Cardiac septum (tissue), 1 donor: ENCODE measurements at regions of chr7 and their contacts with region 1.

Region 1: DNA sequence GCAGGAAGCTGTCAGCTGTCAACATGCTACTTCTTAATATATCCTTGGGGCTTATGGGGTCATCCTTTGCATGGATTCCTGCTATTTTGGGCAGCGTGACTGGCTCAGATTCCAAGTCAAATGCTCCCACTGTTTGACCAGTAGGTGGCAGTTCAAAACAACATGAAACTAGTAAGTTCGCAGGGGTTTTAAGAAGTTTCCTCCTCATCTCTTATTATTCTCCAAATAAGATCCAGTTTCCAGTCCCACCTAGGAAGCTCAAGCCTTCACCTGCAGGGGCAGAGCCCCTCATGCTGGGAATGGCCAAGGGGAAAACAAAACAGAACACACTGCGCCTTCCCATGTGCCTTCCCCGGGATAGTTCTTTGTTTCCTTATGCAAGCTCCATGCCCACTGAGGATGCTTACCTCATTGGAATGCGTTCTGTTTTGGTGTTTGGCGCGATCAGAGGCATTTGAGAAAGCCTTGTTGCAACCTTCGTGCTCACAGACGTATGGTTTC is 259.8 kb downstream of the GLI3 start:
- DNase-seq: no peak

Region 2: DNA sequence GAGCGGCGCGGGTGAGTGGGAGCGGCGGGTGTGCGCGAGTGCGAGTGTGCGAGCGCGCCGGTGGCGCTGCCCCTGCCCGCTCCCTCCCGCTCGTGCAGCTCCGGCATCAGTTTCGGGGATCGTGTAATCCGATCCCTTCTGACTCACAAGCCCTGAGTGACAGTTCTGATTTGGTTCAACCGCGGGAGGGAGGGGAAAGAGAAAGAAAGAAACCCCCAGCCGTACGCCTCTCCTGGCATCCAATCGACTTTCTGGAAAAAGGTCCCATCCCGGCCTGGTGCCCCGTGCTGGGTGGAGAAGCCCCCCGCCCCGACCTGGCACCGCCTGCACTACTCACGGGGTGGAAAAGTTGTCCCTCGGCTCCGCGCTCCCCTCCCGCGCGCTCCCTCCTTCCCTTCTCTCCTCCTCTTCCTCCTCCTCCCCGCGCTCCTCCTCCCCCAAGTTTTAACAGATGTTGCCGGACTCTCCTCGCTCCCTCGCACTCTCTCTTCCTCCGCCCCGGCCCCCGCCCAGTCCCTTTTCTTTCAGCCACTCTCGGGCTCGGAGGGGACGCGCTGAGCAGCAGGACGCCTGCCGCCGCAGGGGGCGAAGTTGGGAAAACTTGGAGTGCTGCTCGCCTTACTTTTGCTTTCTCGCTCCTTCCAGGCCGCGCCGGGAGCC is 260.1 kb after region 1 on chr7 and contains the start of gene GLI3:
- intact Hi-C with region 1: loop called (anchors 10 kb)
- DNase-seq: peak; percentile 88
- total RNA-seq, gene GLI3: 10.5 TPM

Region 3: DNA sequence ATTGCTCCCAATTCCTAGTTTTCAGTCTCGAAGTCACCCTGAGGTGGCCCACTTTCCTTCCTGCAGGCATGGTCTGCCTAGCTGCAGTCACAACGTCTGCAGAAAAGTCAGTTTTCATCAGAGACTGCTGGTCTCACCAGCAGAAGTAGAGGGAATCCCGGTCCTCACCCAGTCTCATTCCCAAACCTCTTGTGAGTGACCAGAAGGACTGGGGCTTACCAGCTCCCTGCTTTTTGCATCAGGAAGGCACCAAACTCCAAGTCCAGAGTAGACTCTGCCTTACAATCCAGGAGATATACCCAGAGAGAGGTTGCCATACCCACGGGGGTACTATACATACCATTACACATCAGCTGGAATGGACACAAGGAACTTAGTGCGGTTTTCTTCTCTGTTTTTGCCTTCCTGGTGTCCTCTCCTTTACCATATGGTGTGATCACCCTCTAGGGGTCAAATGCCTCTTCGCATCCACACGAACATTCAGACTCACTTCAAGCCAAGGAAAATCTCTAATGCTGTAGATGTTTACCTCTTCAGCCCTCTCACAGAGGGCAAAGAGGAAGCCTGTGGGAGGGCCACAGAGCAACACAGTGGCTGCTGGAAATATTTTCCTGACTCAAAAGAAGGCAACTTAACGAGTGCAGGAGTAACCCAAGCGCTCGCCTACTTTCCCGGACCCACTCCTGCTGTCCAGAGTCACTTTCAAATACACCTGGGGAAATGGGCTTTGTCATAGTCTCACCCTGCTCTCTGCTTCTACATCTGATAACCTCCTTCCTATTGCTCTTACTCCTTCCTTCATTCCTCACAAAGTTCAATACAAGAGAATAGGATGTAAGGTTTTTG is 713.8 kb after region 1 on chr7:
- intact Hi-C with region 1: loop called (anchors 5 kb)
- DNase-seq: no peak

Region 4: DNA sequence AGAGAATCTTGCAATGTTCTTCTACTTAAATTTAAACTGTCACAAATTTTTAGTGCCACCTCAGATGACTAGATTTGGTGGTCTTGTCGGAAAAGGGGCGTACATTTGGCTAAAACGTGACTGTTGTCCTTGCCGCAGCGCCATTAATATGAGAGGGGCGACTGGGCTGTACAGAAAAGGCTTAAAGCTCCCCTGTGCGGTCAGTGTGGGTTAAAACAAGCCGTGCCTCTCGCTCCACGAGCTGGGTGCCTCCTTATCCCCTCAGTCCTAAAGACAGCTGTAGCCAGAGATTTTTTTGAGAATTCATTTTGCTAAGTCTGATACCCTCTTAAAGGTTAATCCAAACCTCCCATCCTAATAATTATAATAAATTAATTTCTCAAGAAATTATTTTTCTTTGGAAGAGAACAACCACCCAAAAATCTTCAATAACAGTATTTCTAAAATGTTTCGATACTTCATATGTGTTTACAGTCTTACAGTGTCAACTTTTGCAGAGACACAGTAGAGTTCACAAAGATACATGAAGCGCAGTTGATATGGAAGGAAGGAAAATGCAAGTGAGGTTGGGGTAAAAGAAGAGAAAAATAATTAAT is 866.1 kb after region 1 on chr7:
- intact Hi-C with region 1: loop called (anchors 2 kb)
- DNase-seq: no peak